Stomach (tissue), 19 donors: ENCODE measurements at regions of chr6 and their contacts with region 1.

Region 1: GRCh38 chr6:110944681-110945151 is 13.8 kb upstream of the GTF3C6 start:
- DNase-seq: peak in 1 of 2 donors; percentile 18
- H3K4me3 ChIP-seq: no peak overlapping the region
- H3K27ac ChIP-seq: no peak overlapping the region
- H3K4me1 ChIP-seq: peaks cover 0 to 4% (median 2%) of the 10 kb centered on the region in 4 donors
- H3K27me3 ChIP-seq: no peaks in the 10 kb centered on the region
- CTCF ChIP-seq: no peak
- EP300 ChIP-seq: no peak
- POLR2A ChIP-seq: no peak

Region 2: GRCh38 chr6:110523451-110524021 is 421.2 kb before region 1 on chr6:
- intact Hi-C with region 1: loop called (anchors 5 kb)
- DNase-seq: no peak
- H3K4me3 ChIP-seq: no peak overlapping the region
- H3K27ac ChIP-seq: no peak overlapping the region
- H3K4me1 ChIP-seq: peaks cover 0 to 9% (median 4%) of the 10 kb centered on the region in 4 donors
- H3K27me3 ChIP-seq: no peaks in the 10 kb centered on the region
- CTCF ChIP-seq: no peak
- EP300 ChIP-seq: no peak
- POLR2A ChIP-seq: no peak

Region 3: GRCh38 chr6:110690084-110690650 is 254.5 kb before region 1 on chr6:
- intact Hi-C with region 1: loop called (anchors 10 kb)
- DNase-seq: no peak
- H3K4me3 ChIP-seq: no peak overlapping the region
- H3K27ac ChIP-seq: no peak overlapping the region
- H3K4me1 ChIP-seq: peaks cover 5 to 26% (median 9%) of the 10 kb centered on the region in 4 donors
- H3K27me3 ChIP-seq: no peaks in the 10 kb centered on the region
- CTCF ChIP-seq: no peak
- EP300 ChIP-seq: no peak
- POLR2A ChIP-seq: no peak